ENCODE measurements at regions of chr12 and their contacts with region 1.

Region 1: DNA sequence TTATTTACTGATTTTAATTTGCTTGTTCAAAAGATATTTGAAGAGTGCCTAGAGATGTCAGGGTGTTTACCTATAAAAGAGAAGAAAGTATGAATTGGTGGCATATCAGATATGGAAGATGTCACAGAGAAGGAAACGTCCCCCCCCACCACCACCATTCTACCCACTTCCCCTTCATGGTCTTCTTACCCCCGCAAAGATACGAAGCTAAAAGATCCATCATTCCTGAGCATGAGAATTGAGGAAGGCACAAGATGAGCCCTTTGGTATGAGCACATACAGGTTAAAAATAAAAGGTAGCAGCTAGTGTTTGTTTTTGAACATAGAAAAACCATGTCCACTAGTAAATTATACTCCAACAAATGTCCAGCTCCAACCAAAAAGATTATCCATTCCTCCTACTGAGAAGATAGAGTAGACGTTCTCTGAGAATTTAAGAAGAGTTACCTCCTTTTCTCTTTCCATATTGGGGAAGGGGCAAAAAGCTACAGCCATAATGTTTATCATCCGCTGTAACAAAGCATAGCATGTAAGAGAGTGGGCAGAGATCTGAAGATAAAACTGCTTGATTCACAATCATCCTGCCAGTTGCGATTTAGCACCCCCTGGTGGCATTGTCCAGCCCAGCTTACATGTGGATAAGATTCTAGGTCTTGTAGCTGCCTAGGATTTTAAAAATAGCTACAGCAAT is 29.1 kb downstream of the NFYB start:
- DNase-seq: peak; percentile 63 to 76 (median 73)
- ATAC-seq: peak; percentile 32 to 89 (median 76)
- H3K4me3 ChIP-seq: no peak overlapping the region
- H3K27ac ChIP-seq: no peak overlapping the region
- H3K4me1 ChIP-seq: peaks cover 0 to 19% (median 8%) of the 10 kb centered on the region in 12 donors
- H3K27me3 ChIP-seq: no peaks in the 10 kb centered on the region
- CTCF ChIP-seq: peak; percentile 73 to 91 (median 86)
- POLR2A ChIP-seq: no peak

Region 2: DNA sequence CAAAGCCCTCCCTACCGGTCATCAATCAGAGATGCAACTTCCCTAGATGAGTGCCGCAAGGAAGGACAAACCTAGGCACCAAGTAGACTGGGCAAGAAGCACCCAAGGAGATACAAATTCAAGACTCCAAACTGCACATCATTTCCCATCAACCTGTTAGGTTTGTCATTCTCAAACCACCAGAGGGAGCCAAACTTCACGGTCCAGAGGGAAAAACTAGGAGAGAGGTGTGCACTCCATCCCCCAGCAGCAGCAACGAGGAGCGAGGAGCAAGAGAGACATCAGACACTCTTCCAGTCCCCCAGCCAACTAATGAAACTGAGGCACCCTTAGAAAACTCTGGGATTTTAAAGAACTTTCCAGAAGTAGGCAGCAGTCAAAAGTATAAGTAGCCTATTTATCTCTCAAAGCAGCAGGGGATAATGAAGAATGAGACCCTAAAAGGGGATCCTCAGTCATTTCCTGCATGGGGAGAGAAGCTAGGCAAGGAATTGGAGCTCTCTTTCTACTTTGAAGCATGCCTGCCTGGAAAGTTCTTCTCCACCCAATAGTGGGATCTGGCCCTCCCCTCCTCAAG is 230.9 kb before region 1 on chr12:
- intact Hi-C with region 1: loop called in 9 of 10 experiments (anchors 2 to 10 kb)
- DNase-seq: peak in 4 of 5 donors; percentile 26 to 45 (median 42)
- ATAC-seq: peak; percentile 42 to 78 (median 75)
- H3K4me3 ChIP-seq: no peak overlapping the region
- H3K27ac ChIP-seq: no peak overlapping the region
- H3K4me1 ChIP-seq: peaks cover 0 to 4% (median 0%) of the 10 kb centered on the region in 12 donors
- H3K27me3 ChIP-seq: no peaks in the 10 kb centered on the region
- CTCF ChIP-seq: peak; percentile 49 to 77 (median 70)
- POLR2A ChIP-seq: no peak

Region 3: DNA sequence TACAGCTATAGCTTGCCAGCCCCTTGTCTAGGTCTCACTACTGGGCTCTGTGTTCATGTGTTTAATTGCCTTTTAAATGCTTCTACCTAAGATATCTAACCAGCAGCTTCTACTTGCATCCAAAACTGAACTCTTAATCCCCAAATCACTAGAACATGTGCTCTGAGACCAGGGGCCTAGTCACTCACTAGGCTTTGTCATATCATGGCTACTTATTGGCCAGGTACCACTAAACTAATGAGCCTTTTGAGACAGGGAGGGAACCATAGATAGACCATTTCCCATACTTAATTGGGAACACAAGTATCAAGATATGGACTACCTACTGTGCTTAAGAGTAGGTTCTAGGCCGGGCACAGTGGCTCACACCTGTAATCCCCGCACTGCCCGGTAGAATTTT is 172.2 kb before region 1 on chr12:
- intact Hi-C with region 1: loop called in 1 of 10 experiments (anchors 5 kb)
- DNase-seq: no peak
- ATAC-seq: no peak
- H3K4me3 ChIP-seq: no peak overlapping the region
- H3K27ac ChIP-seq: no peak overlapping the region
- H3K4me1 ChIP-seq: peaks cover 10 to 55% (median 41%) of the 10 kb centered on the region in 12 donors
- H3K27me3 ChIP-seq: no peaks in the 10 kb centered on the region
- CTCF ChIP-seq: no peak
- POLR2A ChIP-seq: no peak

Region 4: DNA sequence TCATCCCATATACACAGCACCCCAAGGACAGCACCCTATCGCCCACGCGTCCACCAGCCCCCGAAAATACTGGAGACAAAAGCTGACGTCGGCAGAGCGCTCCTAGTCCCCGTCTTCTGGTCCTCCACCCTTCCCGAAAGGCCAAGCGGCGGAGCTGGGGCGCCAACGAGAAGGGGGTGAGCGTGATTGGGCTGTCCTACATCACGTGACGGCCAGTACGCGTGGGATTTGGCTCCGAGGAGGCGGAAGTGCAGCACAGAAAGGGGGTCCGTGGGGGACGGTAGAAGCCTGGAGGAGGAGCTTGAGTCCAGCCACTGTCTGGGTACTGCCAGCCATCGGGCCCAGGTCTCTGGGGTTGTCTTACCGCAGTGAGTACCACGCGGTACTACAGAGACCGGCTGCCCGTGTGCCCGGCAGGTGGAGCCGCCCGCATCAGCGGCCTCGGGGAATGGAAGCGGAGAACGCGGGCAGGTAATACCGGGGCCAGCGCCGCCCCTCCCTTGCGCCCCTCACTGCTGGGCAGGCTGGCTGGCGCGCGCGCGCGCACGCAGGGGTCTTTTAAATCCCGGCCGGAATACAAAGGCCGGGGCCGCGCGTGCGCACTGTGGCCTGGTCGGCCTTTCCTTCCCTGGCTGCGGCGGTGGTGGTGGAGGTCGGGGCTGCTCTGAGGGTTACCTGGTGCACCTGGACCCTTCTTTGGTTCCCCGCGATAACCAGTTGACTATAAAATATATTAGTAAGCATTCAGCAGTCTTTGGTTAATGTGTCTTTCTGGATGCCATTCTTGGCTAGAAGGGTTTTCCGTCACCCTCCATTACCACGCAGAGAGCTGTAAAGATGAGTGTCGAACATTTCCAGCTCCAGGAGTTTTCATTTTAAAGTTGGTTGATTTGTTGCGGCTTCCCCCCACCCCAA is 143.1 kb before region 1 on chr12 and contains the start of gene TDG:
- intact Hi-C with region 1: loop called in 1 of 10 experiments (anchors 10 kb)
- DNase-seq: peak; percentile 98 to 99 (median 99)
- ATAC-seq: peak; percentile 98 to 99 (median 99)
- H3K4me3 ChIP-seq: peak within 1 kb of the TSS; percentile 74 to 99 (median 84)
- H3K27ac ChIP-seq: peak within 1 kb of the TSS; percentile 73 to 98 (median 96)
- H3K4me1 ChIP-seq: peaks cover 4 to 63% (median 51%) of the 10 kb centered on the region in 12 donors
- H3K27me3 ChIP-seq: no peaks in the 10 kb centered on the region
- CTCF ChIP-seq: peak in 3 of 12 donors; percentile 11 to 36 (median 29)
- POLR2A ChIP-seq: peak; percentile 4 to 92
- total RNA-seq, gene TDG: 7.8 to 15.5 (median 13.1) TPM

Region 5: GRCh38 chr12:104064031-104064822 is 44.7 kb before region 1 on chr12 and contains the start of gene HCFC2:
- intact Hi-C with region 1: loop called in 2 of 10 experiments (anchors 5 kb)
- DNase-seq: peak; percentile 93 to 96 (median 95)
- ATAC-seq: peak; percentile 98 to 99 (median 99)
- H3K4me3 ChIP-seq: peak within 1 kb of the TSS; percentile 66 to 99 (median 89)
- H3K27ac ChIP-seq: peak within 1 kb of the TSS; percentile 78 to 95 (median 88)
- H3K4me1 ChIP-seq: peaks cover 0 to 31% (median 21%) of the 10 kb centered on the region in 12 donors
- H3K27me3 ChIP-seq: no peaks in the 10 kb centered on the region
- CTCF ChIP-seq: peak in 1 of 12 donors; percentile 8
- POLR2A ChIP-seq: peak in 1 of 2 donors; percentile 62
- total RNA-seq, gene HCFC2: 7.1 to 14.0 (median 9.3) TPM

Region 6: GRCh38 chr12:104166465-104166864 is 57.6 kb after region 1 on chr12:
- intact Hi-C with region 1: no loop called
- DNase-seq: peak in 3 of 5 donors; percentile 13 to 43 (median 24)
- ATAC-seq: peak; percentile 17 to 80 (median 63)
- H3K4me3 ChIP-seq: no peak overlapping the region
- H3K27ac ChIP-seq: peak overlapping the region in 10 of 12 donors; percentile 18 to 64 (median 44)
- H3K4me1 ChIP-seq: peaks cover 0 to 29% (median 16%) of the 10 kb centered on the region in 12 donors
- H3K27me3 ChIP-seq: no peaks in the 10 kb centered on the region
- CTCF ChIP-seq: peak in 2 of 12 donors; percentile 8 to 16
- POLR2A ChIP-seq: no peak

Region 7: GRCh38 chr12:104243551-104243950 is 134.7 kb after region 1 on chr12:
- intact Hi-C with region 1: no loop called
- DNase-seq: no peak
- ATAC-seq: peak in 1 of 4 donors; percentile 49
- H3K4me3 ChIP-seq: no peak overlapping the region
- H3K27ac ChIP-seq: no peak overlapping the region
- H3K4me1 ChIP-seq: peaks cover 0 to 5% (median 0%) of the 10 kb centered on the region in 12 donors
- H3K27me3 ChIP-seq: no peaks in the 10 kb centered on the region
- CTCF ChIP-seq: no peak
- POLR2A ChIP-seq: no peak

Measured in heart left ventricle (tissue), 16 donors.